Mucosa of descending colon (tissue), 3 donors: ENCODE measurements at regions of chr10 and their contacts with region 1.

Region 1: GRCh38 chr10:115558252-115558651 is 465.1 kb downstream of the ATRNL1 start:
- DNase-seq: no peak
- ATAC-seq: no peak
- H3K4me3 ChIP-seq: no peak overlapping the region
- H3K4me1 ChIP-seq: no peaks in the 10 kb centered on the region
- CTCF ChIP-seq: no peak

Region 2: GRCh38 chr10:114337505-114338462 is 1220.5 kb before region 1 on chr10:
- intact Hi-C with region 1: no loop called
- DNase-seq: no peak
- ATAC-seq: no peak
- H3K4me3 ChIP-seq: no peak overlapping the region
- H3K4me1 ChIP-seq: no peaks in the 10 kb centered on the region
- CTCF ChIP-seq: no peak

Region 3: GRCh38 chr10:116385994-116386809 is 828.0 kb after region 1 on chr10:
- intact Hi-C with region 1: loop called in 1 of 2 experiments (anchors 5 kb)
- DNase-seq: peak in 1 of 3 donors; percentile 54
- ATAC-seq: no peak
- H3K4me3 ChIP-seq: no peak overlapping the region
- H3K4me1 ChIP-seq: no peaks in the 10 kb centered on the region
- CTCF ChIP-seq: no peak